ENCODE measurements at regions of chr5 and their contacts with region 1.

Region 1: DNA sequence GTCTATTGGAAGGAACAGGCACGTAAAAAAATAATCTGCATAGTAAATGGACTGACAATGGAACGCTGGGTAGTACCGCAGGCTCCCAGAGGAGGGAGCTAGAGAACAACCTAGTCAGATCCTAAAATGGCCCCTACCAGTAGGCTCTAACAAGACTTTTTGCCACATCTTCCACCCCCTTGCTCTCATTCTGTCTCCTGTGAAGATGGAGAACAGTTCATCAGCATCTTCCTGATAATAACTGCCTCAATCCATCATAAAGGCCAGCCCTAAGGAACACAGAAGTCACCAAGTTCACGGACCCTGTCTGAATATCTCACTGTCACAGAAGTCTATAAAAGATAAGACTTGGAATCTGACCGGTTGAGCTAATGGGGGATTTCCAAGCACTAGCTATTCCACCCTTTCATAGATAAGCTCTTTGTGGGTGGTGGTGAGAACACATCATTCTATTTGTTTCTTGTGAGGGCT is 133.4 kb downstream of the SLC1A3 start:
- DNase-seq: no peak
- ATAC-seq: peak; percentile 84
- H3K4me3 ChIP-seq: no peak overlapping the region
- H3K27ac ChIP-seq: no peak overlapping the region
- H3K4me1 ChIP-seq: no peaks in the 10 kb centered on the region
- H3K27me3 ChIP-seq: no peaks in the 10 kb centered on the region
- CTCF ChIP-seq: peak; percentile 85 to 96 (median 93)
- EP300 ChIP-seq: no peak
- POLR2A ChIP-seq: no peak
- RAD21 ChIP-seq: peak; percentile 84

Region 2: DNA sequence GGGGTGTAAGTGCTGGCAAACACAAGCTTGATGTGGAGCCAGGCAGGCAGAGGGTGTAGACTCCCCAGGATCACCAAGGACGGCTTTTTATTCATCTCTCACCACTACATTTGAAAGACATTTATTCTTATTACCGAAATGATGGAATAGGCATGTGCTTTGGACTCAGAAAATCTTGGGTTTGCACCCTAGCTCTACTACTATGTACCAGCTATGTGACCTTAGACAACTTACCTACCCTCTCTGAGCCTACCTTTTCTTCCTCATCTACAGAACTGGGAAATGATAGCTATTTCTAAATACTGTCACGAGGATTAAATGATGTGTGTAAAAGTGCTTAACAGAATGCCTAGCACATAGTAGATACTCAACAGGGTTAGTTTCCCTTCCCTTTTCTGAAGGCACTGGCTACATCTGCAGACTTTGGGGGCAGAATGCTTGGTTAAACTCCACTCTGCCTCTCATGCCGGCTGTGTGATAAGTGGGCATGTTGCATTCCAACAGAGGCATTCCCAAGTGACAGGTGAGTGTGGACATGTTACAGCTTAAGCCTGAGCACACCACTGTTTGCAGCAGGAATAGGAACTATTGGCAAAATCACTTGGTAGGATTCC is 38.6 kb before region 1 on chr5:
- CTCF ChIA-PET with region 1: interaction called, 14 read pairs
- POLR2A ChIA-PET with region 1: no interaction called
- RAD21 ChIA-PET with region 1: no interaction called
- SMC1A ChIA-PET with region 1: no interaction called
- in situ Hi-C with region 1: no loop called
- intact Hi-C with region 1: no loop called
- DNase-seq: peak; percentile 55
- ATAC-seq: peak; percentile 98
- H3K4me3 ChIP-seq: no peak overlapping the region
- H3K27ac ChIP-seq: peak overlapping the region; percentile 46
- H3K4me1 ChIP-seq: peaks cover 23% of the 10 kb centered on the region
- H3K27me3 ChIP-seq: no peaks in the 10 kb centered on the region
- CTCF ChIP-seq: no peak
- EP300 ChIP-seq: peak in 1 of 2 experiments; percentile 58; a peak in 2 of 4 replicates
- POLR2A ChIP-seq: no peak
- RAD21 ChIP-seq: no peak

Region 3: GRCh38 chr5:36870399-36871040 is 130.7 kb after region 1 on chr5:
- CTCF ChIA-PET with region 1: interaction called, 47 read pairs
- POLR2A ChIA-PET with region 1: interaction called, 3 read pairs
- RAD21 ChIA-PET with region 1: interaction called, 14 read pairs
- SMC1A ChIA-PET with region 1: interaction called, 20 read pairs
- in situ Hi-C with region 1: loop called (anchors 5 kb)
- intact Hi-C with region 1: loop called (anchors 1 kb)
- DNase-seq: no peak
- ATAC-seq: peak; percentile 79
- H3K4me3 ChIP-seq: no peak overlapping the region
- H3K27ac ChIP-seq: no peak overlapping the region
- H3K4me1 ChIP-seq: peaks cover 7% of the 10 kb centered on the region; the same call in 1 of the 2 replicates
- H3K27me3 ChIP-seq: no peaks in the 10 kb centered on the region
- CTCF ChIP-seq: peak; percentile 36 to 66 (median 58); a peak in 5 of 6 replicates
- EP300 ChIP-seq: no peak
- POLR2A ChIP-seq: no peak
- RAD21 ChIP-seq: peak; percentile 59

Region 4: DNA sequence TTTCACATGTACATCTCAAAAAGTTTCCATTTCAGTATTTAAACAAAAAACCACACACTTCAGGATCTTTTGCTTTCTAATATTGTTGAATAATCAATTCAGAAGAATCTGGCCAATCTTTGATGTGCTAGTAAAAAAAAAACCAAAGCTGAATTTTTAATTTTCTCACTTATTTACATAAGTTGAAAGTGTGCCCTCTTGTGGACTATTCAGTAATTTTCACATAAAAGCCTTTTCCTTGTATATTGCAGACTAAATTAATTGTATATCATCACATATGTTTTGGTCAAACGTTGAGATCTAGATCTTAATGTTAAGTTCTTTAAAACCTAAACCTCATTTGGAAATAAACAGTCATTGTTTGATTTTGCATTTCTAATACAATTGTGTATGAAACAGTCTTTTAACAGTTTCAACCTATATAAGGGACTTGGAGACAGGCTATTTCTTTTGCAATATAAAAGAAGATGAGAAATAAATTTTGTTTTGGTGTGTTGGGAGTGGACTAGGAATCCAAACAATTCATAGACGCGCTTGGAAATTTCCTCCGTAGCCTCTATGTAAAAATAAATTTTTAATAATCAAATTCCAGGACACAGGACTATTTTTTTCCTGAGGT is 204.9 kb after region 1 on chr5:
- CTCF ChIA-PET with region 1: interaction called, 11 read pairs
- POLR2A ChIA-PET with region 1: no interaction called
- RAD21 ChIA-PET with region 1: interaction called, 4 read pairs
- SMC1A ChIA-PET with region 1: interaction called, 14 read pairs
- in situ Hi-C with region 1: loop called (anchors 5 kb)
- intact Hi-C with region 1: loop called (anchors 2 kb)
- DNase-seq: no peak
- ATAC-seq: peak; percentile 38
- H3K4me3 ChIP-seq: no peak overlapping the region
- H3K27ac ChIP-seq: no peak overlapping the region
- H3K4me1 ChIP-seq: no peaks in the 10 kb centered on the region
- H3K27me3 ChIP-seq: no peaks in the 10 kb centered on the region
- CTCF ChIP-seq: peak in 2 of 3 experiments; percentile 44 to 47; a peak in 3 of 6 replicates
- EP300 ChIP-seq: no peak
- POLR2A ChIP-seq: no peak
- RAD21 ChIP-seq: peak; percentile 38; the same call in 1 of the 2 replicates

Region 5: DNA sequence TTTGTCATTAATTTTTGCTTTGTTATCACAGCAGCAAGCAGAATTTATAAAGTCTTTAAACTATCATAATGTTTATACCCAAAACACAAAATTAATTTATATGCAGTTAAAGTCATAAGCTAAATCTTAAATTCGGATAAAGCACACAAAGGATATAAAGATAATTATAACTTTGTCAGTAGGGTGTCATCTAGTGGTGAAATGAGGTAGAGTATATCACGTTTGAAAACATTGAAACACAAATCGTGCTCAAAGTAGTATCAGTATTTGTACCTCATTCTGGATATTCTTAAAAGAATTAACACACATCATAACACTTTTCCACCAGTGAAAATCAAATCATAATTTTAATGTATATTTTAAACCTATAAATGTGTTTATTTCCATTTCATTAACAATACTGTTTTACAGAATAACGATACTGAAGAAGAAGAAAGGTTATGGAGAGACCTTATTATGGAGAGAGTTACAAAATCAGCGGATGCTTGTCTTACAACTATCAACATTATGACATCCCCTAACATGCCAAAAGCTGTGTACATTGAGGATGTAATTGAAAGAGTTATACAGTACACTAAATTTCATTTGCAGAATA is 266.3 kb after region 1 on chr5:
- CTCF ChIA-PET with region 1: interaction called, 47 read pairs
- POLR2A ChIA-PET with region 1: no interaction called
- RAD21 ChIA-PET with region 1: interaction called, 5 read pairs
- SMC1A ChIA-PET with region 1: interaction called, 27 read pairs
- in situ Hi-C with region 1: loop called (anchors 5 kb)
- intact Hi-C with region 1: loop called (anchors 2 kb)
- DNase-seq: no peak
- ATAC-seq: peak; percentile 66
- H3K4me3 ChIP-seq: no peak overlapping the region
- H3K27ac ChIP-seq: no peak overlapping the region
- H3K4me1 ChIP-seq: no peaks in the 10 kb centered on the region
- H3K27me3 ChIP-seq: no peaks in the 10 kb centered on the region
- CTCF ChIP-seq: peak; percentile 42 to 57 (median 56); a peak in 4 of 6 replicates
- EP300 ChIP-seq: no peak
- POLR2A ChIP-seq: no peak
- RAD21 ChIP-seq: peak; percentile 52; the same call in 1 of the 2 replicates

Measured in GM12878 (cell line).